HCT116 (cell line): ENCODE measurements at regions of chr3 and their contacts with region 1.

Region 1: DNA sequence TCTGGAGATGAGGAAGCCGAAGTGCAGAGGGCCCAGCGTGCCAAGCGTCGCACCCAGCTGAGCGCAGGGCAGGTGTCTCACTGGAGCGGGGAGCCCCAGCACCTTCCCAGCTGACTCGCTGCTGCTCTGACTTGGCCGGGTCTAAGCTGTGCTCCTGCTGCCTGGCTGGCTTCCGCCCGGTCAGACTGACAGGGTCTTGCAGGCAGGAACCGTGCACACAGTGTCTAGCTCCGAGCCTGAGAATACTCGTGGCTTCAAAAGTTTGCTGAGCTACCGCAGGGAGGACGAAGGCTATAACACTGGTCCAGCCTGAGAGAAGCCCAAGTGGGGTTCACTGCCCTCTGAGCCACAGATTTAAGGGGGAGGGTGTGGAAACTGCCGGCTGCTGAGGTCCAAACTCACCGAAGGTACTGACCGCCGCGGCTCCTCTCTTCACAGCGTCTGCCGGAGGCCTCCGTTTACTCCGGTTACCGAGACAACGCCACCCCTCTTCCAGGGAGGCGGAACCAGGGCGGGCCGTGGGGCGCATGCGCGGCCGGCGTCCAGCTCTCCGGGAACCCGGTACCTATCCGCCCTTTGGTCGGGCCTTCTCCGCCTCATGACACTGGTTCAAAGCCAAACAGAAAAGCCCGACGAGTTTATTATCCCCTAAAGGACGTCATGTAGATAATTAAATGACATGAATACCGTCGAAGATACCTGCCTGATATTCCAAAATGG is at the start of gene CFAP44:
- DNase-seq: no peak
- ATAC-seq: no peak
- H3K4me3 ChIP-seq: no peak within 1 kb of the TSS
- H3K27ac ChIP-seq: no peak within 1 kb of the TSS
- H3K4me1 ChIP-seq: peaks cover 0 to 10% of the 10 kb centered on the region in 2 experiments; a peak in 2 of 4 replicates
- H3K27me3 ChIP-seq: no peaks in the 10 kb centered on the region
- CTCF ChIP-seq: no peak
- POLR2A ChIP-seq: no peak
- RAD21 ChIP-seq: no peak
- total RNA-seq, gene CFAP44: 5.4 TPM

Region 2: GRCh38 chr3:113795693-113796092 is 354.5 kb after region 1 on chr3:
- CTCF ChIA-PET with region 1: no interaction called
- POLR2A ChIA-PET with region 1: no interaction called
- RAD21 ChIA-PET with region 1: no interaction called
- intact Hi-C with region 1: loop called (anchors 5 kb)
- DNase-seq: no peak
- ATAC-seq: no peak
- H3K4me3 ChIP-seq: no peak overlapping the region
- H3K27ac ChIP-seq: no peak overlapping the region
- H3K4me1 ChIP-seq: no peaks in the 10 kb centered on the region
- H3K27me3 ChIP-seq: no peaks in the 10 kb centered on the region
- CTCF ChIP-seq: no peak
- POLR2A ChIP-seq: no peak
- RAD21 ChIP-seq: no peak